ENCODE measurements at regions of chr2 and their contacts with region 1.

Region 1: DNA sequence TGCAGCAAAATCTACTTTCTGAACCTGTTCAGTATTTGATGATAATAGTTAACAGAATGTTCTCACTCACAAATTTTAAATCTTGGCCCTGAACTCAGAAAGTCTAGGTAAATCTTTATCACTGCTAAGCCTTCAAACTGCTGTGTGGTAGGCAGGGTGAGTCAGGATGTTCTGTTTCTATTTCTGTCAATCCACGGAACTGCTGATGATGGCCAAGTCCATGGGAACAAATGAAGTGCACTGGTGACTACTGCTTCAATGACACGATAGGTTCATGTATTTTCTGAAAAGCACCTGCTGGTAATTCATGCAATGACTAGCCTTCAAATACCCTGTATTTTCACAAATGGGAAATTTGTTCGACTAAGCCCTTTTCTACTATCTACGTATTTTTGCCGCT is 14.2 kb downstream of the NIFK start:
- DNase-seq: peak; percentile 67
- ATAC-seq: peak; percentile 73
- H3K4me3 ChIP-seq: peak overlapping the region; percentile 39
- H3K27ac ChIP-seq: peak overlapping the region; percentile 86
- H3K4me1 ChIP-seq: peaks cover 16% of the 10 kb centered on the region
- H3K27me3 ChIP-seq: no peaks in the 10 kb centered on the region
- CTCF ChIP-seq: no peak

Region 2: DNA sequence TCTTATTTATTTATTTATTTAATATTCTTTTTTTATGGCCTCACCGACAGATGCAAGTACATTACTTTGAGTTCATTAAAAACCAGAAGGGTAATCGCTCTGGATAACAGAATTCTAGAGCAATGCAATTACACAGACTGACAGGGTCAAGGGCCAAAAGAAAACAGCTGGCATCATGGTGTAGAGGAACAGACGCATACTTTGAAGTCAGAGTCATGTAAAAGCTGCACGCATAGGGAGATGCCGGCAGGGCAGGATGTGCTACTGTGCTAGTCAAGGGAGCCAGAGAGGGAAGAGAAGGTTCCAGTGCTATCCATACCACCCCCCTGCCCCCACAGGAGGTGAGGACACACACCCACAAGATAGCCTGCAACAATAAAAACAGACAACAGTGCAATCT is 322.3 kb before region 1 on chr2:
- CTCF ChIA-PET with region 1: no interaction called
- POLR2A ChIA-PET with region 1: no interaction called
- intact Hi-C with region 1: loop called (anchors 1 kb)
- DNase-seq: no peak
- ATAC-seq: no peak
- H3K4me3 ChIP-seq: no peak overlapping the region
- H3K27ac ChIP-seq: no peak overlapping the region
- H3K4me1 ChIP-seq: no peaks in the 10 kb centered on the region
- H3K27me3 ChIP-seq: no peaks in the 10 kb centered on the region
- CTCF ChIP-seq: no peak

Region 3: GRCh38 chr2:121634354-121635307 is 87.8 kb before region 1 on chr2:
- CTCF ChIA-PET with region 1: no interaction called
- POLR2A ChIA-PET with region 1: no interaction called
- intact Hi-C with region 1: loop called (anchors 1 kb)
- DNase-seq: peak; percentile 95
- ATAC-seq: peak; percentile 94
- H3K4me3 ChIP-seq: peak overlapping the region; percentile 25; the same call in 1 of the 2 replicates
- H3K27ac ChIP-seq: peak overlapping the region; percentile 97
- H3K4me1 ChIP-seq: peaks cover 27% of the 10 kb centered on the region
- H3K27me3 ChIP-seq: no peaks in the 10 kb centered on the region
- CTCF ChIP-seq: no peak

Region 4: DNA sequence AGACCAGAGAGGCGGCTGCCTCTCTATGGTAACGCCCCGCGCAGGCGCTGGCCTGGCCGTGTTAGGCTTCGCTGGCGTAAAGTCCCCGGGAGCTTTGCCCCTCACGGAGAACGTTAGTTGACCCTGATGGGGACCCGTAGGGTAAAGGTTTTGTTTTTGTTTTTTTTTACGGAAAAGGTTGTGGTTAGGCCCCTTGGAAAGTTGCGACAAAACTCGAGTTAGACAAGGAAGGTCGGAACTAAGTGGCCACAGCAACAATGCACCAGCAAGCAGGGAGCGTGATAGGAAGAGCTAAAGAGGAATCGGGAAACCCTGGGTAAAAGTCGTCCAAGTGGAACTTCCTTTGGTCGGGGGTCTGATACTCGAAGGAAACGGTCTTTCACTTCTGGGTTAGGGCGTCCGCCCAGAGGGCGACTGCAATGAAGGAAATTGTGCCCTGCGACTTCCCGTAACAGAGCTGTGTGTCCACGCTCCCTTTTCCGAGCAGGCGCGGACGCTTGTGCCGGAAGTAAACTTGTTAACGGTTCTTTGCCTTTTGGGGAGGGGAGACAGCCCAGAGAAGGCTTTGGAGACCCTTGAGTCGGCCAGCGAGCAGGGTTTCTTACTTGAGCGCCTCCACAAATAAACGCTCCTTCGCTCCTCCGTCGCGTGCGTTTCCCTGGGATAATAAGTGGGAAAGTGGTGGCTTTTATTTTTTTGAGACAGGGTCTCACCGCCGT is 72.7 kb before region 1 on chr2:
- CTCF ChIA-PET with region 1: no interaction called
- POLR2A ChIA-PET with region 1: no interaction called
- intact Hi-C with region 1: loop called (anchors 5 kb)
- DNase-seq: peak; percentile 96
- ATAC-seq: peak; percentile 90
- H3K4me3 ChIP-seq: peak overlapping the region; percentile 87
- H3K27ac ChIP-seq: peak overlapping the region; percentile 85
- H3K4me1 ChIP-seq: peaks cover 21% of the 10 kb centered on the region
- H3K27me3 ChIP-seq: no peaks in the 10 kb centered on the region
- CTCF ChIP-seq: no peak

Measured in PC-3 (cell line).